ENCODE measurements at regions of chr1 and their contacts with region 1.

Region 1: DNA sequence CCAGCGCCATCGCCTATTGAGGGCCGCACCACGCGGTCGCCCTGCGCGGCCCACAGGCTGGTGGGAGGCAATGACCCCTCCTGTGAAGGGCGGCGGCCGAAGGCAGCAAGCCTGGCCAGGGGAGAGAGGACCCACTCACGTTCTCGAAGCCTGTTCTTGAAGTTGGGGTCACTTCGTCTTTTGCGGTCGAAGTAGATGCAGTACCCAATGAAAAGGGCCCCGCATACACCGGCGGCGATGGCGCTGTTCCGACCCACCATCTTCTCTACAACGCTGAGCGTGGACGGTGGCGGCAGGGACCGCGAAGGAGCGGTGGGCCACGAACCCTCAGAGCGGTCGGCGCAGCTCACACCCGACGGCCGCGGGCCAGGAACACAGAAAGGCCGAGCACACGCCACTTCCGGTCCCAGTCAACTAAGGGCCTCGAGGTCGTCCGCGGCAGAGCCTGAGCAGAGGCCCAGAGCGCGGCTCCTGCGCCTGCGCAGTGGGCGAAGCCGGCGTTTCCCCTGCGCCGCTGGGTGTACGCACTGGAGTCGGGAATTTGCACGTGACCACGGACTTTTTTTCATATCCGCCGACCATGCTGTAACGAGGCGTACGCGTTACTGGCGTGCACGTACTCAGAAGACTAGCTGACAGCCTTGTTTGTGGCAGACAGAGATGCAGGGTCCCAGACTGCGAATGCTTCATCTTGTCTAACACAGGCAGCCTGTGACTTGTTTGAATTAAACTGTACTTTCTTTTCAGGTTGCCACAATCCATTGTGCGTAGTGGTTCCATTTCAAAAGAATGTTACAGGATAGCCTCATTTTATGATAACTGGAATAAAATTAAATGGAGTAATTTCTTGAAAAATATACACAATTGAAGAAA is at the start of gene TOMM20:
- DNase-seq: peak; percentile 84 to 97 (median 93)
- ATAC-seq: peak; percentile 92 to 96 (median 94)
- H3K4me3 ChIP-seq: peak within 1 kb of the TSS; percentile 85 to 94
- H3K4me3 Mint-ChIP-seq: peak within 1 kb of the TSS; percentile 94 to 100 (median 99)
- H3K27ac ChIP-seq: peak within 1 kb of the TSS; percentile 93
- H3K27ac Mint-ChIP-seq: peak within 1 kb of the TSS; percentile 94 to 98
- H3K4me1 ChIP-seq: peaks cover 6 to 43% of the 10 kb centered on the region in 2 experiments
- H3K4me1 Mint-ChIP-seq: peaks cover 36 to 49% (median 44%) of the 10 kb centered on the region in 3 donors
- H3K27me3 ChIP-seq: no peaks in the 10 kb centered on the region
- H3K27me3 Mint-ChIP-seq: no peaks in the 10 kb centered on the region
- total RNA-seq, gene TOMM20: 81.7 to 115 (median 106) TPM

Region 2: GRCh38 chr1:234260578-234260977 is 868.1 kb before region 1 on chr1:
- CTCF ChIA-PET with region 1: no interaction called
- POLR2A ChIA-PET with region 1: no interaction called
- DNase-seq: peak in 1 of 35 experiments; percentile 2
- ATAC-seq: peak in 2 of 4 experiments; percentile 31 to 66
- H3K4me3 ChIP-seq: no peak overlapping the region
- H3K4me3 Mint-ChIP-seq: no peak overlapping the region
- H3K27ac ChIP-seq: no peak overlapping the region
- H3K27ac Mint-ChIP-seq: no peak overlapping the region
- H3K4me1 ChIP-seq: peaks cover 0 to 4% of the 10 kb centered on the region in 2 experiments
- H3K4me1 Mint-ChIP-seq: peaks cover 5 to 8% (median 7%) of the 10 kb centered on the region in 3 donors
- H3K27me3 ChIP-seq: peaks cover 0 to 7% of the 10 kb centered on the region in 2 experiments
- H3K27me3 Mint-ChIP-seq: peaks cover 0 to 9% of the 10 kb centered on the region in 2 donors

Region 3: DNA sequence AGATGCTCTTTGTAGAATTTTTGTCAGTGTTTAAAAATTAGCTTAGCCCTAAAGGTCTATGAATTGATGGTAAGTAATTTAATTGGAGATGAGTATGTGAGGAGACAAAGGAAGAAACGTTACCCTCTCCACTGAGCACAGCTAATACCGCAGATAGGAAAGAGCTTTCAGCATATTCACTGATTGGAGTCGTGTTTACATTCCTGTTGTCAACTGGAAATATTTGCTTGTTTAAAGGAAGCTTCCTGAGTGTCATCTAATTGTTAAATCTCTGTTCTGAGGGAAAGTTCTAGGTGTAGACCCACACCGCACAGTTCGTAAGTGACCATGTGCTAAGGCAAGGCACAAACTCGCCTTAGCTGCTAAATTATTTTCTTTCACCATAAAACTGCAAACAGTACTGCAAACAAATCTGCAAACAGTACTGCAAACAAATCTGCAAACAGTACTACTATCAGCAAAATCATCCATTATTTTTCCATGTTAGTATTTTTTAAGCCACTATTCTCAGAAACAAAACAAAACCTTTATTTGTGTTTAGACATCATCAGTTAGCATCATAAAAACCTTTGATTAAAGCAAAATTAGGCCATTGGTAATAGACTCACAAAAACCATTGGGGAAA is 32.6 kb before region 1 on chr1:
- CTCF ChIA-PET with region 1: interaction called in 1 of 2 experiments, 4 read pairs
- POLR2A ChIA-PET with region 1: interaction called in 1 of 2 experiments, 10 read pairs
- DNase-seq: no peak
- ATAC-seq: no peak
- H3K4me3 ChIP-seq: no peak overlapping the region
- H3K4me3 Mint-ChIP-seq: no peak overlapping the region
- H3K27ac ChIP-seq: no peak overlapping the region
- H3K27ac Mint-ChIP-seq: no peak overlapping the region
- H3K4me1 ChIP-seq: peaks cover 0 to 10% of the 10 kb centered on the region in 2 experiments
- H3K4me1 Mint-ChIP-seq: peaks cover 6 to 11% (median 8%) of the 10 kb centered on the region in 3 donors
- H3K27me3 ChIP-seq: peaks cover 0 to 29% of the 10 kb centered on the region in 2 experiments
- H3K27me3 Mint-ChIP-seq: peaks cover 4 to 8% of the 10 kb centered on the region in 2 donors

Region 4: DNA sequence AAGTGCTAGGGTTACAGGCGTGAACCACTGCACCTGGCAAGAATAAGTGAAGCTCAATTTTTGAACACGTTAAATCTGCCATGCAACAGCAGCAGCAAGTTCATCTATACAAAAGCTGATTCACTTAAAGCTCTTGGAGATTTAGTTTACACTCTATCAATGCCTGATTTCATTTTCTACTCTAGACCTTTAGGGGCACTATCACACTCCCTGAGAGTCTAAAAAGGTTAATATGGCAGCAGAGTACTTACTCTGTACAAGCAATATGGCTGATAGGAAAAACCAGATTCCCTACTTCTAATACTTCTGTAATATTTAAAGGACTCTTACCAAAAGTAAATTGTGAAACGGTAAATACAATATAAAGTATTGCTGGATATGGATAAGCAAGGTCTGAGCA is 27.6 kb after region 1 on chr1:
- CTCF ChIA-PET with region 1: interaction called, 4 to 8 read pairs
- POLR2A ChIA-PET with region 1: interaction called, 4 to 10 read pairs
- DNase-seq: no peak
- ATAC-seq: no peak
- H3K4me3 ChIP-seq: no peak overlapping the region
- H3K4me3 Mint-ChIP-seq: no peak overlapping the region
- H3K27ac ChIP-seq: no peak overlapping the region
- H3K27ac Mint-ChIP-seq: no peak overlapping the region
- H3K4me1 ChIP-seq: peaks cover 13 to 33% of the 10 kb centered on the region in 2 experiments
- H3K4me1 Mint-ChIP-seq: peaks cover 30 to 37% (median 35%) of the 10 kb centered on the region in 3 donors
- H3K27me3 ChIP-seq: no peaks in the 10 kb centered on the region
- H3K27me3 Mint-ChIP-seq: no peaks in the 10 kb centered on the region

Region 5: DNA sequence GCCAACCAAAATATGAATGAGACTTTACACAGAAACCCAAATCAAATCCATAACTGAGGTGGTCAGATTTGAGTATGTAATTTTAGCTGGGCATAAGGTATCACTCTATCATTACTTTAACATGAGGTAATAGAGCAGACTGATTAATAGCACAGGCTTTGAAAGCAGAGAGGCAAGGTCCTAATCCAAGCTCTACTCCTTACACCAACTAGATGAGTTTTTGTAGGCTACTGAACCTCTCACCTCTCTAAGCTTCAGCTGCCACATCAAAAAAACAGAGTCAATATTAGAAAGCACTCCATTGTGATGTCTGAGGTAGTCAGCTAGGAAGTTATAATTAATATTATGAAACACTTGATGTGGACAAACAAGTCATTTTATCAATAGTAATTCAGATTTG is 135.6 kb after region 1 on chr1:
- CTCF ChIA-PET with region 1: no interaction called
- POLR2A ChIA-PET with region 1: no interaction called
- DNase-seq: no peak
- ATAC-seq: no peak
- H3K4me3 ChIP-seq: no peak overlapping the region
- H3K4me3 Mint-ChIP-seq: no peak overlapping the region
- H3K27ac ChIP-seq: no peak overlapping the region
- H3K27ac Mint-ChIP-seq: peak overlapping the region in 1 of 2 donors; percentile 44
- H3K4me1 ChIP-seq: peaks cover 16 to 20% of the 10 kb centered on the region in 2 experiments
- H3K4me1 Mint-ChIP-seq: peaks cover 75 to 85% (median 79%) of the 10 kb centered on the region in 3 donors
- H3K27me3 ChIP-seq: no peaks in the 10 kb centered on the region
- H3K27me3 Mint-ChIP-seq: no peaks in the 10 kb centered on the region

Region 6: DNA sequence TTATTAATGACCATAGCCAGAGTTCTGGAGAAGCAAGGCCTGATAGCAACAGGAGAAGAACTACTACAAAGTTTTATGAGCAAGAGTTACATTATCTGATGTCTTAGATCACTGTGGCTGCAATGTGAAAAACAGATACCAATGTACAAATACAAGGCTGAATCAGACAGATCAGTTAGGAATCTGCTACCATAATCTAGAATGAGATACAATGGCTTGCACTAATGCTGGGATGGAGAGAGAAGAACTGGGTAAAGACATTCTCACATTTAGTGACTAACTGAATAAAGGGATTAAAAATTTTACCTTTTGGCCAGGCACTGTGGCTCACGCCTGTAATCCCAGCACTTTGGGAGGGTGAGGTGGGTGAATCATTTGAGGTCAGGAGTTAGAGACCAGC is 158.0 kb after region 1 on chr1:
- CTCF ChIA-PET with region 1: no interaction called
- POLR2A ChIA-PET with region 1: no interaction called
- DNase-seq: no peak
- ATAC-seq: no peak
- H3K4me3 ChIP-seq: no peak overlapping the region
- H3K4me3 Mint-ChIP-seq: peak overlapping the region in 1 of 3 donors; percentile 26
- H3K27ac ChIP-seq: no peak overlapping the region
- H3K27ac Mint-ChIP-seq: peak overlapping the region; percentile 5 to 13
- H3K4me1 ChIP-seq: peaks cover 19 to 45% of the 10 kb centered on the region in 2 experiments
- H3K4me1 Mint-ChIP-seq: peaks cover 74 to 85% (median 84%) of the 10 kb centered on the region in 3 donors
- H3K27me3 ChIP-seq: no peaks in the 10 kb centered on the region
- H3K27me3 Mint-ChIP-seq: no peaks in the 10 kb centered on the region

Region 7: DNA sequence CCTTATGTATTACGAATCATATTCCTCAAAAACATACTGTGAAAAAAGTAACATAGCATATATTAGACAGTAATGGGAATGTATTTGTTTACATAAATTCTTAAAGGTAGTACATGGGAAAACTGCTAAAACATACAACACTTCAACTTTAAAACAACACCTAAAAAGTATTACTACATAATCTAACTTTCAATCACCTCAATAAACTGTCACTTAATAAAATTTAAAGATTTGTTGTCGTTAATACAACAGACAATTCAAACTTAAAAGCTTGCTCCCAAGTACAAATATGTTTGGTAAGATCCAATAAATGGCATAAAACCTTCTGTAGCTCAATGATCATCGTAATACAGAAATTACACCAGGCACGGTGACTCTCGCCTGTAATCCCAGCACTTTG is 195.6 kb after region 1 on chr1:
- CTCF ChIA-PET with region 1: no interaction called
- POLR2A ChIA-PET with region 1: interaction called in 1 of 2 experiments, 10 read pairs
- DNase-seq: no peak
- ATAC-seq: no peak
- H3K4me3 ChIP-seq: peak overlapping the region in 1 of 2 donors; percentile 4
- H3K4me3 Mint-ChIP-seq: peak overlapping the region in 2 of 3 donors; percentile 64 to 99
- H3K27ac ChIP-seq: peak overlapping the region; percentile 26
- H3K27ac Mint-ChIP-seq: peak overlapping the region; percentile 62 to 82
- H3K4me1 ChIP-seq: peaks cover 21 to 34% of the 10 kb centered on the region in 2 experiments
- H3K4me1 Mint-ChIP-seq: peaks cover 60 to 66% (median 62%) of the 10 kb centered on the region in 3 donors
- H3K27me3 ChIP-seq: no peaks in the 10 kb centered on the region
- H3K27me3 Mint-ChIP-seq: no peaks in the 10 kb centered on the region